ENCODE measurements at regions of chr2 and their contacts with region 1.

Region 1: GRCh38 chr2:229800997-229801754 is 86.8 kb upstream of the DNER start:
- DNase-seq: peak; percentile 15
- H3K4me3 ChIP-seq: no peak overlapping the region
- H3K27ac ChIP-seq: no peak overlapping the region
- H3K27me3 ChIP-seq: no peaks in the 10 kb centered on the region
- CTCF ChIP-seq: peak; percentile 81

Region 2: DNA sequence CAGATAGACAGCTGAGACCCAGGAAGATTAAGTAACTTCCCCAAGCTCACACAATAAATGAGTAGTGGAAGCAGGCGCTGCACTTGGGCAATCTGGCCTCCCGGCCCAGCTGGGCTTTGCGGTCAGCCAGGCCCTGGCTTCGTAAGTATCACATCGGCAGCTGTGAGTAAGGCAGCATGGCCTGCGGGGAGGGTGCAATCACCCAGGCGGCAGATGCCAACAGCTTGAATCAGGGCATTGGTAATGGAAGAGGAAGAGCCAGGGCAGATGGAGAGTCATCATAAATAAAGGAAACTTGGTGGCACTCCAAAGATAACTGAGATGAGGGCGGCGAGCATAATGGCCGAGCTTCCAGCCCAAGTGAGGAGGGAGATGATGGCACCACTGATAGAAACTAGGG is 312.2 kb before region 1 on chr2:
- CTCF ChIA-PET with region 1: no interaction called
- POLR2A ChIA-PET with region 1: no interaction called
- DNase-seq: no peak
- H3K4me3 ChIP-seq: no peak overlapping the region
- H3K27ac ChIP-seq: no peak overlapping the region
- H3K27me3 ChIP-seq: no peaks in the 10 kb centered on the region
- CTCF ChIP-seq: no peak

Region 3: GRCh38 chr2:229780856-229781773 is 20.1 kb before region 1 on chr2:
- CTCF ChIA-PET with region 1: interaction called, 69 read pairs
- POLR2A ChIA-PET with region 1: no interaction called
- DNase-seq: peak; percentile 21
- H3K4me3 ChIP-seq: no peak overlapping the region
- H3K27ac ChIP-seq: no peak overlapping the region
- H3K27me3 ChIP-seq: no peaks in the 10 kb centered on the region
- CTCF ChIP-seq: peak; percentile 92

Region 4: GRCh38 chr2:229815858-229816257 is 14.7 kb after region 1 on chr2:
- CTCF ChIA-PET with region 1: interaction called, 20 read pairs
- POLR2A ChIA-PET with region 1: no interaction called
- DNase-seq: no peak
- H3K4me3 ChIP-seq: no peak overlapping the region
- H3K27ac ChIP-seq: no peak overlapping the region
- H3K27me3 ChIP-seq: no peaks in the 10 kb centered on the region
- CTCF ChIP-seq: no peak

Region 5: DNA sequence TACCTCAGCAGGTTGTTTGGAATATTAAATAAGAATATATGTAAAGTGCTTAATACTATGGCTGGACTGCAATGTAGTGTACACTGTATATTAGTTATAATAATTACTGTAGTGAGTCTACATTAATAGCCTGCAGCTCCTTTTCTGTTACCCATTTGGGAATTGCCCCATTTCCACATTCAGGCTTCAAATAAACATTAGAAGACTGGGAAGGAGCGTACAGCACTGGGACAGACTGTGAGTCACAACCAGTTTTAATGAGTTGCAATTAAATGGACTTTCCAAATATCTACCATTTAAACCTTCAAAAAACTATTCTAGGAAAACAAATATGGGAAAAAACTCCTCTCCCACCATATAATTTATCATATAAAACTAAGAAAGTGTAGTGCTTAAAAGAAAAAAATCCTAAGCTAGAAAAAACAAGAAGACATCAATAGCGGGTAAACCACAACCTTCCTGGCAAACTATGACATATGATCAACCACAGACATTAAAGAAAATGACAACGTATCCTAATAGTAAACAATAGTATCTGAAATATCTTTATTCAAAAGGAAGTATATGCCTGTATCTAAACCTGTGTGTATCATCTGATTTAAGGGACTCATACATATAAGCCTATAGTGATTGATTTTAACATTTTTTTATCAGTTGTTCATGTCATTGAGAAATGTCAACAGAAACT is 34.6 kb after region 1 on chr2:
- CTCF ChIA-PET with region 1: interaction called, 29 read pairs
- POLR2A ChIA-PET with region 1: no interaction called
- DNase-seq: no peak
- H3K4me3 ChIP-seq: no peak overlapping the region
- H3K27ac ChIP-seq: no peak overlapping the region
- H3K27me3 ChIP-seq: no peaks in the 10 kb centered on the region
- CTCF ChIP-seq: no peak

Region 6: DNA sequence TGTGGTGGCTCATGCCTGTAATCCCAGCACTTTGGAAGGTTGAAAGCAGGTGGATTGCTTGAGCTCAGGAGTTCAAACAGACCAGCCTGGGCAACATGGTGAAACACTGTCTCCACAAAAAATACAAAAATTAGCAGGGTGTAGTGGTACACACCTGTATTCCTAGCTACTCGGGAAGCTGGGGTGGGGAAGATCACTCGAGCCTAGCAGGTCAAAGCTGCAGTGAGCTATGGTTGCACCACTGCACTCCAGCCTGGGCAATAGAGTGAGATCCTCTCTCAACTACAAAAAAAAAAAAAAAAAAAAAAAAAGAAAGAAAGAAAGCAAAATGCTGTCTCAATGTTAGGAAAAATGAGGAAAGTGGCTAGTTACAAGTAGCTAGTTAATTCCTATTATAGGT is 63.9 kb after region 1 on chr2:
- CTCF ChIA-PET with region 1: interaction called, 19 read pairs
- POLR2A ChIA-PET with region 1: no interaction called
- DNase-seq: no peak
- H3K4me3 ChIP-seq: no peak overlapping the region
- H3K27ac ChIP-seq: no peak overlapping the region
- H3K27me3 ChIP-seq: no peaks in the 10 kb centered on the region
- CTCF ChIP-seq: no peak

Region 7: DNA sequence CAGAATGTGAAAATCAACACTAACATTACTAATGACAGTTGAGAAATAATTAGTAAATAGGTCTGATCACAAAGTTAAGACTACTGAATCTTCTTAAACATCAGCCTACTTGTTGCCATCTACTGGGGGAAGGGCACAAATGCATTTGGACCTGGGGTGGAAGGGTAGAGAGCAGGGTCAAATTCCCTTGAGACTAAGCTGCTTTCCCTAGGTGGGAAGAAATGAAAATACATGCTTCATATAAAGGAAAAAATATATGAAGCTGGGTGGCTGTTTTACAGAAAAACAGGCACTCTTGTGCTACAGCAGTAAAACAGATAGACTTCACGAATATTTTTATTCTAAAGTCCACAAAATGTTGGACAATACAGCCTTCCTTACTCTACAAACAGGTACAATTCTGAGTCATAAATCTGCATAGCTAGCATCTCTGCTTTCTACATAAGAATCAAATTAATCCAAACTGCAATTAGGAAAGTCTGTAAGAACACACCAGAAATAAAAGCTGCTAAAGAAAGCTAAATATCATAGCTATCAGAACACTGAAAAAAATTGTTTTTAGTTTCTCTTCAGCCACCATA is 109.7 kb after region 1 on chr2:
- CTCF ChIA-PET with region 1: interaction called, 19 read pairs
- POLR2A ChIA-PET with region 1: no interaction called
- DNase-seq: no peak
- H3K4me3 ChIP-seq: no peak overlapping the region
- H3K27ac ChIP-seq: no peak overlapping the region
- H3K27me3 ChIP-seq: no peaks in the 10 kb centered on the region
- CTCF ChIP-seq: 0 out of 2 replicates have a peak, but pooled peaks have one; percentile 32

Region 8: DNA sequence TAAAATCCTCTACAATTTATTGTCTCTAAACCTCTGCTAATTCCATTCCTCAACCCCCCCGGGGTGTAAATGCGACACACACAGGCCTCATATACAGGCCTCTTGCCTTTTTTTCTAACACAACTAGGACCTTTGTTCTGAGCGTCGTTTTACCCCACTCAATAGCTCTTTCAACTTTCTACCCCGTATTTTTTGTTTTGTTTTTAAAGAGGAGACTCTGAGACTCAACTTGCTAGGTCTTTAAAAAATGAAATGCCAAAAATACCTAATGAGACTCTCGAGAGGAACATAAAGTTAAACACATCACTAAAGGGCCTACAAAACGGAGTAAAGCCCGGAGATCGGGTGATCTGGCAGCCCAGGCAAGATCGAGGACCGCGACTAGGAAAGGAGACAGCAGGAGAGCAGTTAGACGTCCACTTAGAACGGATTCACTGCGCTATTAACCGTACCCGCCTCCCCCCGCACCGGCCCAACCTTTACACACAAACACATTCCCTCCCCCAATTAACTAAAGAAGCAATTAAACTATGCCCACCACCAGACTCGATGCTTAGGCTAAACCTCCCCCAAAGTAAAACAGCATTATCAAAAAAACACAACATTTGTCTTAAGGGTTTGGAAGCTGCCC is 119.0 kb after region 1 on chr2:
- CTCF ChIA-PET with region 1: interaction called, 11 read pairs
- POLR2A ChIA-PET with region 1: no interaction called
- DNase-seq: no peak
- H3K4me3 ChIP-seq: peak overlapping the region; percentile 90
- H3K27ac ChIP-seq: peak overlapping the region; percentile 39
- H3K27me3 ChIP-seq: no peaks in the 10 kb centered on the region
- CTCF ChIP-seq: no peak

Measured in AG04450 (cell line).